PC-3 (cell line): ENCODE measurements at regions of chr17 and their contacts with region 1.

Region 1: GRCh38 chr17:66466840-66467367 is 164.5 kb downstream of the PRKCA start:
- DNase-seq: peak; percentile 99
- ATAC-seq: peak; percentile 92
- H3K4me3 ChIP-seq: peak overlapping the region; percentile 45
- H3K27ac ChIP-seq: peak overlapping the region; percentile 80
- H3K4me1 ChIP-seq: peaks cover 71% of the 10 kb centered on the region
- H3K27me3 ChIP-seq: no peaks in the 10 kb centered on the region
- CTCF ChIP-seq: no peak

Region 2: DNA sequence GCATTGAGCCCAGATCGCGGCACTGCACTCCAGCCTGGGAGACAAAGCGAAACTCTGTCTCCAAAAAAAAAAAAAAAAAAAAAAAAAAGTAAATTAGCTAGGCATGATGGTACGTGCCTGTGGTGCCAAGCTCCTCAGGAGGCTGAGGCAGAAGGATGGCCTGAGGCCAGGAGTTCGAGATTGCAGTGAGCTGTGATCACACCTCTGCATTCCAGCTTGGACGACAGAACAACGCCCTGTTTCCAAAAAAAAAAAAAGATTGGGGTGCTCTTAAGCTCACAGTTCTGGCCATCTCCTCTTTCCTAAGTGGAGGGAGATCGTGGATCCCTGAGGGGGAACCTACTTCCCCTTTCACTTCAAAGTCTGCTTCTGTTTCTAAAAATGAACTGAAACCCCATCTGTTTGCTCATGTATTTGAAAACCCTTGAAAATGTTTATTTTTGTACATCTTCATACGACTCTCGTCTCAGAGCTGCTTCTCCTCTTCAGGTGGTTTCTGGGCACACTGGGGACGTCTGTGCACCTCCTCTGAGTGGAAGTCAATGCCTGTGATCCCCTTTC is 25.7 kb before region 1 on chr17:
- CTCF ChIA-PET with region 1: no interaction called
- POLR2A ChIA-PET with region 1: no interaction called
- intact Hi-C with region 1: no loop called
- DNase-seq: no peak
- ATAC-seq: no peak
- H3K4me3 ChIP-seq: no peak overlapping the region
- H3K27ac ChIP-seq: no peak overlapping the region
- H3K4me1 ChIP-seq: no peaks in the 10 kb centered on the region
- H3K27me3 ChIP-seq: no peaks in the 10 kb centered on the region
- CTCF ChIP-seq: no peak

Region 3: GRCh38 chr17:66517336-66518009 is 50.6 kb after region 1 on chr17:
- CTCF ChIA-PET with region 1: no interaction called
- POLR2A ChIA-PET with region 1: no interaction called
- intact Hi-C with region 1: no loop called
- DNase-seq: no peak
- ATAC-seq: no peak; the same call in 1 of the 2 replicates
- H3K4me3 ChIP-seq: no peak overlapping the region
- H3K27ac ChIP-seq: no peak overlapping the region
- H3K4me1 ChIP-seq: peaks cover 18% of the 10 kb centered on the region
- H3K27me3 ChIP-seq: no peaks in the 10 kb centered on the region
- CTCF ChIP-seq: no peak

Region 4: GRCh38 chr17:66541461-66542128 is 74.7 kb after region 1 on chr17:
- CTCF ChIA-PET with region 1: no interaction called
- POLR2A ChIA-PET with region 1: no interaction called
- intact Hi-C with region 1: loop called (anchors 2 kb)
- DNase-seq: peak; percentile 86
- ATAC-seq: peak; percentile 62
- H3K4me3 ChIP-seq: no peak overlapping the region
- H3K27ac ChIP-seq: peak overlapping the region; percentile 89
- H3K4me1 ChIP-seq: peaks cover 53% of the 10 kb centered on the region
- H3K27me3 ChIP-seq: no peaks in the 10 kb centered on the region
- CTCF ChIP-seq: no peak

Region 5: GRCh38 chr17:66548158-66548557 is 81.3 kb after region 1 on chr17:
- CTCF ChIA-PET with region 1: no interaction called
- POLR2A ChIA-PET with region 1: no interaction called
- intact Hi-C with region 1: loop called (anchors 1 kb)
- DNase-seq: peak; percentile 85
- ATAC-seq: peak; percentile 49
- H3K4me3 ChIP-seq: peak overlapping the region; percentile 15; the same call in 1 of the 2 replicates
- H3K27ac ChIP-seq: peak overlapping the region; percentile 98
- H3K4me1 ChIP-seq: peaks cover 76% of the 10 kb centered on the region
- H3K27me3 ChIP-seq: no peaks in the 10 kb centered on the region
- CTCF ChIP-seq: no peak